ENCODE measurements at regions of chr15 and their contacts with region 1.

Region 1: GRCh38 chr15:83973816-83974215 is 261.8 kb upstream of the GOLGA6L4 start:
- DNase-seq: peak; percentile 2
- ATAC-seq: peak; percentile 75
- H3K4me3 ChIP-seq: no peak overlapping the region
- H3K27ac ChIP-seq: no peak overlapping the region
- H3K4me1 ChIP-seq: no peaks in the 10 kb centered on the region
- H3K27me3 ChIP-seq: peaks cover 0 to 1% of the 10 kb centered on the region in 2 experiments; a peak in 1 of 5 replicates
- CTCF ChIP-seq: peak; percentile 51
- EP300 ChIP-seq: no peak
- POLR2A ChIP-seq: no peak
- RAD21 ChIP-seq: no peak

Region 2: DNA sequence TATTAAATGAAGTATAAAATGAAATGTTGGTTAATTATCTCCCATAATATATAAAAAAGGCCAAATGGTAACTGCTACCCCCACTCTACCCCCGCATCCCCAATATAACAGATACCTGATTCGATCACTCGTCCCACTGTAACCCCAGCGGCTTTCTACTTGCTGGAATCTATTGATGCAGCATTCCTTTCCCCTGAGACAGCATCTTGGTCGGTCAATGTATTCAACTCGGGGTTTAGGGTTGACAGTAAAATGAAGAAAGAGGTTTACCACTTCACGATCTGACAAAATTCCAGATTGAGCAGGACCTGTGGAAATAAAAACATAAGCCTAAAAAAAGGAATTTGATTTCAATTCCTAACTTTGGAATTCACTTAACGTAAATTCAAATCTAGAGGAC is 943.8 kb before region 1 on chr15:
- CTCF ChIA-PET with region 1: no interaction called
- POLR2A ChIA-PET with region 1: no interaction called
- in situ Hi-C with region 1: no loop called
- intact Hi-C with region 1: no loop called
- DNase-seq: no peak
- ATAC-seq: no peak
- H3K4me3 ChIP-seq: no peak overlapping the region
- H3K27ac ChIP-seq: no peak overlapping the region
- H3K4me1 ChIP-seq: no peaks in the 10 kb centered on the region
- H3K27me3 ChIP-seq: no peaks in the 10 kb centered on the region
- CTCF ChIP-seq: no peak
- EP300 ChIP-seq: no peak
- POLR2A ChIP-seq: no peak
- RAD21 ChIP-seq: no peak

Region 3: GRCh38 chr15:83564975-83565532 is 408.8 kb before region 1 on chr15:
- CTCF ChIA-PET with region 1: no interaction called
- POLR2A ChIA-PET with region 1: no interaction called
- in situ Hi-C with region 1: no loop called
- intact Hi-C with region 1: loop called (anchors 1 kb)
- DNase-seq: no peak
- ATAC-seq: no peak
- H3K4me3 ChIP-seq: no peak overlapping the region
- H3K27ac ChIP-seq: no peak overlapping the region
- H3K4me1 ChIP-seq: no peaks in the 10 kb centered on the region
- H3K27me3 ChIP-seq: no peaks in the 10 kb centered on the region
- CTCF ChIP-seq: no peak
- EP300 ChIP-seq: no peak
- POLR2A ChIP-seq: no peak
- RAD21 ChIP-seq: no peak

Region 4: GRCh38 chr15:83734487-83734886 is 239.3 kb before region 1 on chr15:
- CTCF ChIA-PET with region 1: no interaction called
- POLR2A ChIA-PET with region 1: no interaction called
- in situ Hi-C with region 1: no loop called
- intact Hi-C with region 1: loop called (anchors 5 kb)
- DNase-seq: no peak
- ATAC-seq: 0 out of 3 replicates have a peak, but pooled peaks have one; percentile 31
- H3K4me3 ChIP-seq: no peak overlapping the region
- H3K27ac ChIP-seq: no peak overlapping the region
- H3K4me1 ChIP-seq: no peaks in the 10 kb centered on the region
- H3K27me3 ChIP-seq: no peaks in the 10 kb centered on the region
- CTCF ChIP-seq: no peak; the same call in 1 of the 2 replicates
- EP300 ChIP-seq: no peak
- POLR2A ChIP-seq: no peak
- RAD21 ChIP-seq: no peak

Region 5: DNA sequence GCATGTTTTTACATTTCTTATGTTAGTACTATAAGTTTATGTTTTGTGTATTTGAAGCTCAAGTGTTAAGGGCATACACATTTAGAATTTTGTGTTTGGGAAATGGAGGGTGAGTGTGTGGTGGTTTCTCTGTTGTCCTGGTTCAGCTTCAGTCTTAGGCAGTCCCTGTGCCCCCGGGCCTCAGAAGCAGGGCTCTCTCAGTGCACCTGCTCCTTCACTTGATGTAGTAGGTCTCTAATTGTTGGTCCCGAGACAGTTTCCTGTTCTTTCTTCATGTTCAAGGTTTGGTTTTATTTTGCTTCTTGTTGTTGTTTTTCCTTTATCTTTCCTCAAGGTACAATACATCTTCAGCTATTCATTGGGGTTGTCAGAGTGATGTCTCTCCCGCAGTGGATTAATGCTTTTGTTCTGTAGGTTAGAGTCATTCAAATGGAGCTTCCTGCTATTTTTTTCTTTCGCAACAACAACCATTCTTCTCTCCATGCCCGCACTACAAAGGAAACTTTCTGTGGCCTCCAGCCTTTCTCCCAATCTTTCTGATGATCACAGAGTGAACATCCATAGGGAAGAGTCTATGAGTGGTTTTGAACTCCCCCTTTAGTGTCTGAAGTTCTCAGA is 84.0 kb after region 1 on chr15:
- CTCF ChIA-PET with region 1: no interaction called
- POLR2A ChIA-PET with region 1: no interaction called
- in situ Hi-C with region 1: no loop called
- intact Hi-C with region 1: no loop called
- DNase-seq: no peak
- ATAC-seq: no peak
- H3K4me3 ChIP-seq: no peak overlapping the region
- H3K27ac ChIP-seq: no peak overlapping the region
- H3K4me1 ChIP-seq: no peaks in the 10 kb centered on the region
- H3K27me3 ChIP-seq: no peaks in the 10 kb centered on the region; a peak in 2 of 5 replicates
- CTCF ChIP-seq: no peak
- EP300 ChIP-seq: no peak
- POLR2A ChIP-seq: no peak
- RAD21 ChIP-seq: no peak